Left ventricle myocardium inferior (tissue), 1 donor: ENCODE measurements at regions of chr19 and their contacts with region 1.

Region 1: GRCh38 chr19:13597640-13598039 is 91.4 kb upstream of the CACNA1A start:
- DNase-seq: no peak
- H3K4me3 ChIP-seq: no peak overlapping the region
- H3K27ac ChIP-seq: no peak overlapping the region
- H3K4me1 ChIP-seq: no peaks in the 10 kb centered on the region
- H3K27me3 ChIP-seq: peaks cover 63% of the 10 kb centered on the region
- CTCF ChIP-seq: peak; percentile 69

Region 2: GRCh38 chr19:13723206-13723605 is 125.6 kb after region 1 on chr19:
- intact Hi-C with region 1: loop called (anchors 5 kb)
- DNase-seq: no peak
- H3K4me3 ChIP-seq: no peak overlapping the region
- H3K27ac ChIP-seq: no peak overlapping the region
- H3K4me1 ChIP-seq: no peaks in the 10 kb centered on the region
- H3K27me3 ChIP-seq: peaks cover 19% of the 10 kb centered on the region
- CTCF ChIP-seq: no peak